HepG2 (cell line): ENCODE measurements at regions of chr18 and their contacts with region 1.

Region 1: DNA sequence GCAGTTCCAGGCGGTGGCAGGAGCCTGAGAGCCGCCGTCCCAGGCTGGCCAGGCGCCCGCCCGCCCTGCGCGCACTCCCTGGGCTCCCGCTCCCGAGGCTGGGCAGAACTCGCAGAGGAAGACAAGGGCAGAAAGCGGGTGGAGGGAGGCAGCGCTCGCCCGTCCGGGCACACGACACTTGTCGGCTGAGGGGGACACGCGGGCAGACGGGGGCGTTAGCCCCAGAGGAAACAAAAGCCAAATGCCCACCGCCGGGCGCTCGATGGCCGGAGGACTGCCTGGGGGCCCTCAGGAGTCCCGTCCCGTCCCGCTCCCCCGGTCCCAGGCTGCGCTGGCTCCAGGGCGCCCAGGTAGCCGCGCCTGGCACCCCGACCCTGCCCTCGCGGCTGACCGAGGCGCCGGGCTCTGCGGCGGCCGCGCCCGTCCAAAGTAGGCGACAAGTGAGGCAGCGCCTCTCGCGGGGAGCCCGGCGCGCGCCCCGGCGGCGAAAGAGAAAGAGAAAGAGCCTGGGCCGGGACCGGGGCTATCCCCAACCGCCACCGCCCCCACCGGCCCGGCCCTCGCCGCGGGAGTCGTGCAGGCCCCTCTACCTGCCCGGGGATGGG is 491 bp downstream of the L3MBTL4 start:
- DNase-seq: peak; percentile 22
- ATAC-seq: peak; percentile 89
- H3K4me3 ChIP-seq: peak overlapping the region; percentile 85 to 98 (median 91)
- H3K27ac ChIP-seq: peak overlapping the region; percentile 79
- H3K4me1 ChIP-seq: peaks cover 42% of the 10 kb centered on the region
- H3K27me3 ChIP-seq: no peaks in the 10 kb centered on the region; a peak in 1 of 5 replicates
- CTCF ChIP-seq: peak; percentile 23; the same call in 1 of the 2 replicates
- EP300 ChIP-seq: no peak
- POLR2A ChIP-seq: no peak; a peak in 1 of 4 replicates
- RAD21 ChIP-seq: no peak

Region 2: GRCh38 chr18:6281874-6282273 is 132.3 kb before region 1 on chr18:
- CTCF ChIA-PET with region 1: no interaction called
- POLR2A ChIA-PET with region 1: no interaction called
- in situ Hi-C with region 1: no loop called
- intact Hi-C with region 1: loop called (anchors 5 kb)
- DNase-seq: peak; percentile 85
- ATAC-seq: peak; percentile 97
- H3K4me3 ChIP-seq: no peak overlapping the region
- H3K27ac ChIP-seq: peak overlapping the region; percentile 20
- H3K4me1 ChIP-seq: peaks cover 18% of the 10 kb centered on the region
- H3K27me3 ChIP-seq: no peaks in the 10 kb centered on the region
- CTCF ChIP-seq: peak; percentile 45
- EP300 ChIP-seq: 0 out of 4 replicates have a peak, but pooled peaks of 1 of the 2 experiments have one; percentile 10
- POLR2A ChIP-seq: no peak
- RAD21 ChIP-seq: no peak

Region 3: DNA sequence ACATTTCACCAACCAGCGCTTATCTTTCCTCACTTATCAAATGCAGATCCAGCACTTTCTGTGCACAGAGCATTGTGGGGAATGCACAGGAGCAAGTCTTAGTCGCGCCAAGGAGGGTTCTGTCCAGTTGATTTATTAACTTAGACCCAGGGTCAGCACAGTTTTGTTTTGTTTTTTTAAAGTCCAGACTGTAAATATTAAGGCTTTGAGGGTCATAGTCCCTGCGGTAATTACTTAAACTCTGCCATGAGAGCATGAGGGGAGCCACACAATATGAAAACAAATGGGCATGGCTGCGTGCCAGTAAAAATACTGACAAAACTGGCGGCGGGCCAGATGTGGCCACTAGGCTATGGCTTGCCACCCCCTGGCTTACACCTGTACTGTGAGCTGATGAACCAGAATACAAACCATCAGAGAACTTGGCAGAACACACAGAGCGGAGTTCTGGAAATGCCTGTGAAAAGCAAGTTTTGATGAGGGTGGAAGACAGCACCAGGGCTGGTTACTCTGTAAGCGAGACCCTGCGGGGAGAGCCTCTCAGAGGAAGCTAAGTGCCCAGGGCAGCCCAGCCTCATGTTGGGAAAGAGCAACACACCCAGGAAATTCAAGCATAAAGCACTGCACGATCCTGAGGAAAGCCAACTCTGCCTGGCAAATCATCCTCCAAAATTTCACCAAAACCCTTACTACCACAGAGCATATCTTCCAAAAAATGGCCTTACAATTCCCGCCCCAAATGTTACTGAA is 43.2 kb before region 1 on chr18:
- CTCF ChIA-PET with region 1: no interaction called
- POLR2A ChIA-PET with region 1: interaction called, 3 read pairs
- in situ Hi-C with region 1: no loop called
- intact Hi-C with region 1: loop called (anchors 2 kb)
- DNase-seq: peak; percentile 86
- ATAC-seq: peak; percentile 74
- H3K4me3 ChIP-seq: peak overlapping the region; percentile 39 to 68 (median 53)
- H3K27ac ChIP-seq: peak overlapping the region; percentile 78
- H3K4me1 ChIP-seq: peaks cover 96% of the 10 kb centered on the region
- H3K27me3 ChIP-seq: no peaks in the 10 kb centered on the region
- CTCF ChIP-seq: peak; percentile 25; the same call in 1 of the 2 replicates
- EP300 ChIP-seq: peak in 1 of 2 experiments; percentile 86; a peak in 2 of 4 replicates
- POLR2A ChIP-seq: no peak
- RAD21 ChIP-seq: no peak